ENCODE measurements at regions of chr9 and their contacts with region 1.

Region 1: GRCh38 chr9:97598461-97599288 is 34.5 kb downstream of the TSTD2 start:
- DNase-seq: peak; percentile 81
- CTCF ChIP-seq: peak; percentile 77

Region 2: GRCh38 chr9:97386733-97387503 is 211.8 kb before region 1 on chr9:
- CTCF ChIA-PET with region 1: interaction called, 12 read pairs
- POLR2A ChIA-PET with region 1: no interaction called
- DNase-seq: peak; percentile 84
- CTCF ChIP-seq: peak; percentile 95

Region 3: DNA sequence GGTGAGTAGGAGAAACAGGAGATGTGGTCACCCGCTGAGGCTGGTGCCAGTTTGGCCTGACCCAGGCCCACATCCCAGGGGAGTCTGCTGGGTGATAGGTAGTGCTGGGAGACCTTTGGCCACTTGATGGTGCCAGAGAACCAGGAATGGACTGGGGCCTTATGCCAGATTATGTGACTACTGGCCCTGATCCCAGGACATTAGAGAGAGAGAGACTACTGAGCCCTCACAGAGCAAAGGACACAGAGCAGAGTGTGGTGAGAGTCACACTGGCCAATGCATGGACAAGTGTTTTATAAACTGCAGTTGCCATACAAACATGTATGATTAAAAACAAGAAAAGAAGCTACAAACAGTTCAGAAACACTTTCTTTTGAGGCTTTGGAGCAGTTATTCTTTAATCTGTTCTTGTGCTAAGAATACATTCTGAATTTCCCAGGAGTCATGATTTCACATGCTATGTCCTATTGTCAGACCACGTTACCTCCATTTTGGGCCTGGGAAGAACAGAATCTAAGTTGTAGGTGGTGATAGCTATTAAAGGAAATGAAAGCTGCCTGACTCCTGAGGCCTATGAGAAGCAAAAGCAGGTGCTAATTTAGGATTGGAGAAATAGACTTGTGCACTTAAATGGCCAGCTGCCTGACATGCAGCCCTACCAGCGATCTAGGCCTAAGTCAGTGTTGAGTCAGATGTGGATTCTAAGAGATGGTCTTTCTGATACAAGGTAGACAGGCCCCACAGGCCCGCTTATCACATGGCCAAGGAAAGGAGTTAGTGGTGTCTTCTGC is 129.8 kb before region 1 on chr9:
- CTCF ChIA-PET with region 1: interaction called, 443 read pairs
- POLR2A ChIA-PET with region 1: interaction called, 3 read pairs
- DNase-seq: peak; percentile 69
- CTCF ChIP-seq: peak; percentile 92

Region 4: DNA sequence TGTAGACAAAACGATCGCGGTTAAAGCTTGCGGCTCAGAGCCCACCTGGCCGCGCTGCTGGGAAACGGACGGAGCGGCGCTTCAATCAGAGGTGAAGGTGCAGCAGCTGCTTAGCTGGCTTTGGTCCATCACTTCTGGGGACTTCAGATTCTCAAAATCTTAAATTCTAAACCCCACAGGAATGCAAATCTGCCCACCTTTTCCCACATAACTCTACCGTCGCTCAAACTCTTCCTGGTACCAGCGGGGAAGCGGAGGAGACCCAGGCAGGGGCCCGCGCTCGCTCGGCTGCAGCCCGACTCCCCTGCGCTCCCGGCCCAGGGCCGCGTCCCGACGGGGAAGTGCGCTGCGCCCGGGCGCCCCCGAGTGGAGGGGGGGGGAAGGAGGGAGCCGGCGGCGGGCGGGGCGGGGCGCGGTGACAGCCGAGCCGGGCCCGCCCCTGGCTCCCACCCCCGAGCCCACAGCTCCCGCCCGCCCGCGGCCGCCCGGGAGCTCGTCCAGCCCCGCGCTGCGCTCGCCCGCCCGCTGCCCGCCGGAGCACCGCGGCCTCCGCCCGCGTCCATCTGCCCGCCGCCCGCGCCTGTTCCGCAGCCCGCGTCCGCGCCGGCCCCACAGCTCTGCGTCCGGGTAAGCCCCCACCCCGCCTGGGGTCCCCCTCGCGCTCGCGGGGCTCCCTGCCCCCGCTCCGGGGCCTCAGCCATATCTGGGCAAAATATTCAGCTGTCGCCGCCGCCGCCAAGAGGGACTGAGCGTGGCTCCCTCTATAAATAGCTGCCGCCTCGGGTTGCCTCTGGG is 97.3 kb before region 1 on chr9 and contains the start of gene TMOD1:
- CTCF ChIA-PET with region 1: interaction called, 55 read pairs
- POLR2A ChIA-PET with region 1: interaction called, 3 read pairs
- DNase-seq: peak; percentile 93
- CTCF ChIP-seq: peak; percentile 52

Region 5: GRCh38 chr9:97543565-97543964 is 55.1 kb before region 1 on chr9:
- CTCF ChIA-PET with region 1: interaction called, 15 read pairs
- POLR2A ChIA-PET with region 1: no interaction called
- DNase-seq: no peak
- CTCF ChIP-seq: no peak

Region 6: DNA sequence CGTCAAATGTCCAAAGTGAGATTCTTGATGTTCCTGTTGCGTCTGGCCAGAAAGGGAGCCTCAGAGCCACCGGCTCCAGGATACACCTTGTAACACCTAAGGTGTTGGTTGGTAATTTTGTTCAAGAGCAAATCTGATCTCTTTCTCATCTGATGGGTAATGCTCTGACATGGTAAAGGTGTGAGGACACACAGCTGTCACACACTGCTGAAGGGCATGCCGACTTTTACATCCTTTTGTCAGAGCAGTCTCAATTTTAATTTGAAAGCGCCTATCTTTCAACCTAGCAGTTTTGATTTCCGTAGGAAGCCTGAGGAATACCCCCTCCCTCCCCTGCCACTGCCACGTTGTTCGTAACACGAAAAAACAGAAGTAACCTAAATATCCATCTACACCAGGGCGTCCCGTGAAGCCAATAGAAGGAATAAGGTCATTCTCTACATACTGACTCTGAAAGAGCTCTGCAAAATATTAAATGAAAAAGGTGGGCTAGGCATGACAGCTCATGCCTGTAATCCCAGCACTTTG is 22.9 kb before region 1 on chr9:
- CTCF ChIA-PET with region 1: interaction called, 22 read pairs
- POLR2A ChIA-PET with region 1: no interaction called
- DNase-seq: no peak
- CTCF ChIP-seq: no peak